Caco-2 (cell line): ENCODE measurements at regions of chr4 and their contacts with region 1.

Region 1: DNA sequence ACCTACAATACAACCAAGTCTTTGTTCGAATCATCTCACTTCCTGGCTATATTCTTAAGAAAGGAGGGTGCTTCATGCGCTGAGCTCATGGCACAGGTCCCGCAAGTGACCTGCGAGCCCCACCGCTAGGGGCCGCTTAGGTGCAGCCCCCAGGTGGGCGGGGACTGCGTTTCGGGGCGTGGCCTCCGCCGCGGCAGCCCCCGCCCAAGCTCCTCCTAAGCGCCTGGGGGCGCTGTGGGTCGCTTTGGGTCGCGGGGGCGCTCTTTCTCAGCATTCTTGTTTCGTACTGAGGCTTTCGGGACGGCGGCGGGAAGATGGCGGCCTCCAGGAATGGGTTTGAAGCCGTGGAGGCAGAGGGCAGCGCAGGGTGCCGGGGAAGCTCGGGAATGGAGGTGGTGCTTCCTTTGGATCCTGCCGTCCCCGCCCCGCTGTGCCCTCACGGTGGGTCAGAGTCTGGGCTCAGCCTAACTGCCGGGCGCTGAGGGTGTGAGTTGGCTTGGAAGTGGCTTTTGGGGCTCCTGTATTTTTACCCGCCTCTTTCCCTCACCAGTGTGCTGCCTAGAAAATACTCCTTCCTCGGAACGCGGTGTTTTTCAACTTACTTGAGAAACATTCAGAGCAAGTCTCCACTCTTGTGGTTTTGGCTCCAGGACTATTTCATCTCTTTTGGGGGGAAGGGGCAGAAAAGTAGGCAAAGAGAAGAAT is at the start of gene ZCCHC4:
- DNase-seq: peak; percentile 84 to 90
- H3K4me3 ChIP-seq: peak within 1 kb of the TSS; percentile 78
- H3K4me3 Mint-ChIP-seq: peak within 1 kb of the TSS; percentile 98
- H3K27ac Mint-ChIP-seq: peak within 1 kb of the TSS; percentile 100
- H3K4me1 ChIP-seq: peaks cover 15% of the 10 kb centered on the region
- H3K4me1 Mint-ChIP-seq: peaks cover 7% of the 10 kb centered on the region
- H3K27me3 ChIP-seq: no peaks in the 10 kb centered on the region
- H3K27me3 Mint-ChIP-seq: no peaks in the 10 kb centered on the region
- CTCF ChIP-seq: peak; percentile 88 to 97
- total RNA-seq, gene ZCCHC4: 13.1 and 13.2 TPM in 2 replicates

Region 2: DNA sequence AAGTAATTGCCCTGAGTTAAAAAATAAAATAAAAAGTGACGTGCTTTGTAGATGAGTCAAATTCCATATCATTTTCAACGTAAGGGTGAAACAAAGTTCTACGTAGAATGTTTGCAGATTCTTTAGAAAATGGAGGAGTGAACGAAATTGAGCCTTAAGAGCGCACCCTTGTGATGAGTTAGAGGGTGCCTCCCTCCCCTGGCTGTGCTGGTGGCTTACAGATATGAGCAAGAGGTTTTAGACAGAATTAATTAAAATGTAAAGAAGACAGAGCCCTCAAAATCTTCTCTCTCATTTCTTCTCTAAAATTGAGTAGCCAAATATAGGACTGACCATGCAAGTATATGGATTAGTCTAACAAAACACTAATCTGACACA is 251.7 kb before region 1 on chr4:
- CTCF ChIA-PET with region 1: no interaction called
- POLR2A ChIA-PET with region 1: no interaction called
- intact Hi-C with region 1: no loop called
- DNase-seq: no peak
- H3K4me3 ChIP-seq: no peak overlapping the region
- H3K4me3 Mint-ChIP-seq: no peak overlapping the region
- H3K27ac Mint-ChIP-seq: no peak overlapping the region
- H3K4me1 ChIP-seq: peaks cover 4% of the 10 kb centered on the region; the same call in 1 of the 2 replicates
- H3K4me1 Mint-ChIP-seq: no peaks in the 10 kb centered on the region
- H3K27me3 ChIP-seq: no peaks in the 10 kb centered on the region
- H3K27me3 Mint-ChIP-seq: no peaks in the 10 kb centered on the region
- CTCF ChIP-seq: no peak

Region 3: DNA sequence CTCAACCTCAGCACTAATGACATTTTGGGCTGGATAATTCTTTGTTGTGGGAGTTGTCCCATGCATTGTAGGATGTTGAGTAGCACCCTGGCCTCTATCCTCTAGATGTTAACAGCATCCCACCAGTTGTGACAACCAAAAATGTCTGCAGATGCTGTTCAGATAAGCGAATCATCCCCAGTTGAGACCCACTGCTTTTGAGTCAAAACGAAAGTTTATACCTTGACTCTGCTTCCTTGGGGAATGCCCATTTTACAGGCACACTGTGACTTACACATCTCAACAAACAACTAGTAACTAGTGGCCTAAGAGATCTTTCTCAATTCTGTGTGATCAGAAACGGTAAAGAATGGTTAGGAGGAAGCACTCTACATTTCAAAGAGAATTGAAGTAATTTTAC is 189.4 kb before region 1 on chr4:
- CTCF ChIA-PET with region 1: no interaction called
- POLR2A ChIA-PET with region 1: no interaction called
- intact Hi-C with region 1: no loop called
- DNase-seq: no peak
- H3K4me3 ChIP-seq: no peak overlapping the region
- H3K4me3 Mint-ChIP-seq: no peak overlapping the region
- H3K27ac Mint-ChIP-seq: no peak overlapping the region
- H3K4me1 ChIP-seq: no peaks in the 10 kb centered on the region
- H3K4me1 Mint-ChIP-seq: no peaks in the 10 kb centered on the region
- H3K27me3 ChIP-seq: no peaks in the 10 kb centered on the region
- H3K27me3 Mint-ChIP-seq: no peaks in the 10 kb centered on the region
- CTCF ChIP-seq: no peak

Region 4: DNA sequence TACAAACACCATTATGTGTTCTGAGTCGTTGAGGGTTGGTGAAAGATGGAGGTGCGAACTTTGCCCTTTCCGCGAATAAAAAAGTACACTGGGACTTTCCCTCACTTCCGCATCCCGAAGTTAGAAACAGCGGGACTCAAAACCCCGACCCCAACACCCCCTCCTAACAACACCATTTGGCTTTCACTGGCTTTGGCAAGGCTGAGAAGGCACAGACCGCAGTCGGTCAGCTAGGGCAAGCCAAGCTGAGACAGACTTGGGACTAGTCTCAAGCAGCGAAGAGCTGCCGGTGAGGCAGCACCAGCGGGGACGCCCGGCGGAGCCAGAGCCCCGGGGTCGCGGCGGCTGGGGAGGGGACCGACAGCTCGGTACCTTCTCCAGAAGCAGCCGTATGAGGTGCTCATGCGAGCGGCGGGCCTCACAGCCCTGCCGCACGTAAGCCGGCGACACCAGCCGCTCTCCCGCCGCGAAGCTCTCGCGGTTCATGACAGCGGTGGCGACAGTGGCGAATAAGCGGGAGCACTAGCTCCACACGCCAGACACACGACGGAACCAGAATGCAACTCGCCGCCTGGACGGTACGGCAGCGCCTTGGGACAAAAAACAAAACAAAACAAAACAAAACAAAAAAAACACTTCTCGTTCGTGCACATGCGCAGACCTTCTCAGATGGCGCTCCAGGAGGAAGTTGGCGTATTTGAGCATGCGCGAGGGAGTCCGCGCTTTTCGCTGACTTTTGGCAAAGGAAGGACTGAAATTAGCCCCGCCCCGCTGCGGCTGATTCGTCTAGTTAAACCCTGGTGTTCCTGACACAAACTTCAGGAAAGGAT is 152.5 kb before region 1 on chr4 and contains the start of gene SEPSECS:
- CTCF ChIA-PET with region 1: interaction called, 11 read pairs
- POLR2A ChIA-PET with region 1: interaction called, 4 read pairs
- intact Hi-C with region 1: loop called (anchors 1 kb)
- DNase-seq: peak; percentile 94 to 95
- H3K4me3 ChIP-seq: peak within 1 kb of the TSS; percentile 70
- H3K4me3 Mint-ChIP-seq: peak within 1 kb of the TSS; percentile 92
- H3K27ac Mint-ChIP-seq: peak within 1 kb of the TSS; percentile 92
- H3K4me1 ChIP-seq: peaks cover 14% of the 10 kb centered on the region; the same call in 1 of the 2 replicates
- H3K4me1 Mint-ChIP-seq: peaks cover 16% of the 10 kb centered on the region
- H3K27me3 ChIP-seq: no peaks in the 10 kb centered on the region
- H3K27me3 Mint-ChIP-seq: no peaks in the 10 kb centered on the region
- CTCF ChIP-seq: no peak
- total RNA-seq, gene SEPSECS: 5.7 and 6.0 TPM in 2 replicates

Region 5: GRCh38 chr4:25234390-25235370 is 78.0 kb before region 1 on chr4:
- CTCF ChIA-PET with region 1: interaction called, 34 read pairs
- POLR2A ChIA-PET with region 1: interaction called, 15 read pairs
- intact Hi-C with region 1: loop called (anchors 2 kb)
- DNase-seq: peak; percentile 52 to 68
- H3K4me3 ChIP-seq: peak overlapping the region; percentile 94
- H3K4me3 Mint-ChIP-seq: peak overlapping the region; percentile 94
- H3K27ac Mint-ChIP-seq: peak overlapping the region; percentile 88
- H3K4me1 ChIP-seq: no peaks in the 10 kb centered on the region
- H3K4me1 Mint-ChIP-seq: no peaks in the 10 kb centered on the region
- H3K27me3 ChIP-seq: no peaks in the 10 kb centered on the region
- H3K27me3 Mint-ChIP-seq: no peaks in the 10 kb centered on the region
- CTCF ChIP-seq: peak; percentile 30 to 45

Region 6: DNA sequence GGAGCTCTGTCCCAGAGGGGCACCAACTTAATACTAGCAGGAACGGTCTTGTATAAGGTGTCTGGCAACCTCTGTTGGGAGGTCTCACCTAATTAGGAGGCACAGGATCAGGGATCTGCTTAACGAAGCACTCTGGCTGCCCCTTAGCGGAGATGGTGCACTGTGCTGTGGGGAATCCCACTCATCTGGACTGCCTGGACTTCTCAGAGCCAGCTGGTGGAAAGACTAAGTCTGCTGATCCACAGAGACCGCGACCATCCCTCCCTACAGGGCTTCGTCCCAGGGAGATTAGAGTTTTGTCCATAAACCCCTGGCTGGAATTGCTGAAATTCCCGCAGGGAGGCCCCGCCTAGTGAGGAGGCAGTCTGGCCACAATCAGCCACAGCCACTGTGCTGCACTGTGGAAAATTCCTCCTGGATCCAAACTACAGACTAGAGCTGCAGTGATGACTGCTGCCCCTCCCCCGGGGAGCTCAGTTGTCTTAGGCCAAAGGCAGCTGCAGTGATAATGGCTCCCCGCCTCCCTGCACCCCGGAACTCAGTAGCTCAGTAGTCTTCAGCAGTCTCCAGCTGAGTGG is 22.1 kb before region 1 on chr4:
- CTCF ChIA-PET with region 1: interaction called, 10 read pairs
- POLR2A ChIA-PET with region 1: no interaction called
- intact Hi-C with region 1: no loop called
- DNase-seq: peak; percentile 70 to 83
- H3K4me3 ChIP-seq: no peak overlapping the region
- H3K4me3 Mint-ChIP-seq: no peak overlapping the region
- H3K27ac Mint-ChIP-seq: peak overlapping the region; percentile 76
- H3K4me1 ChIP-seq: peaks cover 15% of the 10 kb centered on the region
- H3K4me1 Mint-ChIP-seq: peaks cover 7% of the 10 kb centered on the region
- H3K27me3 ChIP-seq: no peaks in the 10 kb centered on the region
- H3K27me3 Mint-ChIP-seq: no peaks in the 10 kb centered on the region
- CTCF ChIP-seq: no peak

Region 7: DNA sequence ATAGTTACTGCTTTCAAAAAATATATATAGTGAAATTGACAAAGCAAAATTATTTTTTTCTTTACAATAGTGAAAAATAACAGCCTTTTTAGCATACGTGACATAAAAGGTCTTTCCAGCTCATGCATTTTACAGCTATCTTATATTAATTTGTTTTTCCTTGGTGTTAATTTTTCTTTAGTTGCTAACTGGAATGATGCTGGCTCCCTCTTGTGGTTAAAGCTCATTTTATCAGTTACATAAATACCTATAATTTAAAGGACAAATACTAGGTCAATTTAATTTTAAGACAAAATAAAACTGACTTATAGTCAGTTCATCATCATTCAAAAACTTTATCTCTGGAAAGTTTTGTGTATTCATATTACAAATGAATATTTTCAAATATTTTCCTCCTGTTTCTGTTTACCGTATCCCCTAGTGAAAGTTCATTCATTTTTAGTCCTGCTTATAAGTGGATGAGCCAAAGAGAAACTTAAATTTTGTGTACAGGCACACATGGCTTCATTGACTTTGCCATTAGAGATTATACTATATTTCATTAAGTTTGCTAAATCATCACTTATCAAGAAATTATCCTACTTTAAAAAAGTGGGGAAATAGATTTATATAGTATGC is 54.5 kb after region 1 on chr4:
- CTCF ChIA-PET with region 1: interaction called, 29 read pairs
- POLR2A ChIA-PET with region 1: interaction called, 4 read pairs
- intact Hi-C with region 1: loop called (anchors 5 kb)
- DNase-seq: peak in 1 of 2 experiments; percentile 24
- H3K4me3 ChIP-seq: no peak overlapping the region
- H3K4me3 Mint-ChIP-seq: no peak overlapping the region
- H3K27ac Mint-ChIP-seq: no peak overlapping the region
- H3K4me1 ChIP-seq: peaks cover 15% of the 10 kb centered on the region
- H3K4me1 Mint-ChIP-seq: no peaks in the 10 kb centered on the region
- H3K27me3 ChIP-seq: no peaks in the 10 kb centered on the region
- H3K27me3 Mint-ChIP-seq: no peaks in the 10 kb centered on the region
- CTCF ChIP-seq: peak; percentile 34 to 36

Region 8: DNA sequence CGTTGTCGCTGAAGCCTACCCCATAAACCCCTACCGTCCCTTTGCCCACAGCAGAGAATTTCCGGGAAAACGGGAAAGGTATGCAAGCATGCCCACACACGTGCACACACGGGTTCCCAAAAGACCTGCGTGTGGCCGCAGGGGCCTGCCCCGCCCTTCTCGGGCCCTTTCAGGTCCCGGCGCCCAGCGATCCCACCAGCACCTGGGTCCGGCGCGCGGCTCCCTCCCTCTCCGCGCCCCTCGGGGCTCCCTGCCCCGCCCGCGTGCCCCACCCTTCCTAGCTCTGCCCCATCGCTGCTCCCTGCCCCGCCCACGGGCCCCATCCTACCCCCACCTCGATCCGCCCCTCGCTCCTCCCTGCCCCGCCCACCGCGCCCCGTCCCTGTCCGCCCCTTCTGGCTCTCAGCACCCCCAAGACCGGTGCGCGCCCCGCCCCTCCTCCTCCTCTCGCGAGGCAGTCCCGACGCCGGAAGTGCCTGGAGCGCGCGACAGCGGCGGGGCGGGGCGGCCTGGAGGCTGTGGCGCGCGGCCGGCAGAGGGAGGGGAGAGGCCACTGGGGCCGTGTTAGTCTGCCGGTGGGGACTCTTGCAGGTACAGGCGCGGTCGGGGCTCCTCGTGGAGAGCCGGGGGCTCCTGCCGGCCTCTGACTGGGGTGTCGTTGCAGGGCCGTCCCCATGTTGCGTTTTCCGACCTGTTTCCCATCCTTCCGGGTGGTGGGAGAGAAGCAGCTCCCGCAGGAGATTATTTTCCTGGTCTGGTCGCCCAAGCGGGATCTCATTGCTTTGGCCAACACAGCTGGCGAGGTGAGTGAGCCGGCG is 64.3 kb after region 1 on chr4 and contains the start of gene ANAPC4:
- CTCF ChIA-PET with region 1: interaction called, 5 read pairs
- POLR2A ChIA-PET with region 1: no interaction called
- intact Hi-C with region 1: loop called (anchors 2 kb)
- DNase-seq: peak; percentile 95 to 97
- H3K4me3 ChIP-seq: peak within 1 kb of the TSS; percentile 84
- H3K4me3 Mint-ChIP-seq: no peak within 1 kb of the TSS
- H3K27ac Mint-ChIP-seq: peak within 1 kb of the TSS; percentile 87
- H3K4me1 ChIP-seq: peaks cover 10% of the 10 kb centered on the region; the same call in 1 of the 2 replicates
- H3K4me1 Mint-ChIP-seq: peaks cover 7% of the 10 kb centered on the region
- H3K27me3 ChIP-seq: no peaks in the 10 kb centered on the region
- H3K27me3 Mint-ChIP-seq: no peaks in the 10 kb centered on the region
- CTCF ChIP-seq: no peak
- total RNA-seq, gene ANAPC4: 24.9 and 32.3 TPM in 2 replicates